IMR-90 (cell line): ENCODE measurements at regions of chr16 and their contacts with region 1.

Region 1: DNA sequence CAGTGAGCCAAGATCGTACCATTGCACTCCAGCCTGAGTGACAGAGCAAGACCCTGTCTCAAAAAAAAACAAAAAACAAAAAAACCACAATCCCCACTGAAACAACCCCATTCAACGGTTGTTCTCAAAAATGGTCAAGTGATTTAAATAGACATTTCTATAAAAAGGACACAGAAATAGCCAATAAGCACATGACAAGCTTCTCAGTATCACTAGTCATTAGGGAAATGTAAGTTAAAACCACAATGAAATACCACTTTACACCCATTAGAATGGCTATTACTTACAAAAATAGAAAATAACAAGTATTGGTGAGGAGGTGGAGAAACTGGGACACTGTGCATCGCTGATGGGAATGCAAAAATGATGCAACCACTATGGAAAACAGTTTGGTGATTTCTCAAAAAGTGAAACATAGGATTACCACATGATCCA is 26.6 kb upstream of the MYLK3 start:
- DNase-seq: no peak
- ATAC-seq: peak; percentile 17; the same call in 1 of the 2 replicates
- H3K4me3 ChIP-seq: no peak overlapping the region
- H3K27ac ChIP-seq: no peak overlapping the region
- H3K4me1 ChIP-seq: no peaks in the 10 kb centered on the region; the same call in 1 of the 2 replicates
- H3K27me3 ChIP-seq: no peaks in the 10 kb centered on the region
- CTCF ChIP-seq: no peak
- POLR2A ChIP-seq: no peak
- RAD21 ChIP-seq: no peak

Region 2: GRCh38 chr16:46743238-46743719 is 31.5 kb before region 1 on chr16:
- CTCF ChIA-PET with region 1: no interaction called
- POLR2A ChIA-PET with region 1: interaction called, 7 read pairs
- dilution Hi-C with region 1: no loop called
- in situ Hi-C with region 1: no loop called
- intact Hi-C with region 1: loop called (anchors 5 kb)
- DNase-seq: peak; percentile 28
- ATAC-seq: peak; percentile 75
- H3K4me3 ChIP-seq: no peak overlapping the region
- H3K27ac ChIP-seq: no peak overlapping the region
- H3K4me1 ChIP-seq: peaks cover 13% of the 10 kb centered on the region
- H3K27me3 ChIP-seq: no peaks in the 10 kb centered on the region
- CTCF ChIP-seq: no peak
- POLR2A ChIP-seq: no peak
- RAD21 ChIP-seq: no peak